Caco-2 (cell line): ENCODE measurements at regions of chrX and their contacts with region 1.

Region 1: DNA sequence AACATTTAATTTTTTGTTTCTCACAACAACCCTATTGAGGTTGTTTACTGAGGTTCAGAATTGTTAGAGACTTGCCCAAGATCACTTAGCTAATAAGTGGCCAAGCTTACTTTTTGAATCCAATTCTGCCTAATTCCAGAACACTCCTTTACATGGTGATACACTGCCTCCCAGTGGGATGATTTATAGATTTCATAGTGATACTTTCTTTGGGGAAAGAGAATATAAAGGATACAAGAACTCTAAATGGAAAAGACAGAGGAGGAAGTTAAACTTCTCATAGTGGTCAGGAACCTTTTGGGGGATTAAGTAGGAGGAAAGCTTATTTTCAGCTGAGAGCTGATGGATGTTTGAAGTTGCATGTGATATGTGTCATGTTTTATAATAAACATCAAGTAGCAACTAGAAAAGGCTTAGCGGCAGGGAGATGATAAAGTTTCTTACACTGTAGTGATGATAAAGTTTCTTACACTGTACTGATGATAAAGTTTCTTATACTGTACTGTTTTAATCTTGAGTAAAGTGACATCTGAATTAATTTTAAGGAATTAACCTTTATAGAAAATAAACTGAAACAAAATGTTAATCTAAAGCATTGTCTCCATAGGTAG is 15.3 kb downstream of the STAG2 start:
- DNase-seq: peak in 1 of 2 experiments; percentile 43
- H3K4me3 ChIP-seq: no peak overlapping the region
- H3K4me3 Mint-ChIP-seq: no peak overlapping the region
- H3K27ac Mint-ChIP-seq: no peak overlapping the region
- H3K4me1 ChIP-seq: no peaks in the 10 kb centered on the region
- H3K4me1 Mint-ChIP-seq: peaks cover 11% of the 10 kb centered on the region
- H3K27me3 ChIP-seq: no peaks in the 10 kb centered on the region
- H3K27me3 Mint-ChIP-seq: no peaks in the 10 kb centered on the region
- CTCF ChIP-seq: peak in 1 of 2 experiments; percentile 12

Region 2: GRCh38 chrX:123884809-123885408 is 91.9 kb before region 1 on chrX:
- CTCF ChIA-PET with region 1: interaction called, 5 read pairs
- POLR2A ChIA-PET with region 1: no interaction called
- intact Hi-C with region 1: loop called (anchors 1 kb)
- DNase-seq: peak in 1 of 2 experiments; percentile 60
- H3K4me3 ChIP-seq: no peak overlapping the region
- H3K4me3 Mint-ChIP-seq: no peak overlapping the region
- H3K27ac Mint-ChIP-seq: no peak overlapping the region
- H3K4me1 ChIP-seq: no peaks in the 10 kb centered on the region
- H3K4me1 Mint-ChIP-seq: peaks cover 11% of the 10 kb centered on the region
- H3K27me3 ChIP-seq: no peaks in the 10 kb centered on the region
- H3K27me3 Mint-ChIP-seq: no peaks in the 10 kb centered on the region
- CTCF ChIP-seq: peak; percentile 35 to 44

Region 3: DNA sequence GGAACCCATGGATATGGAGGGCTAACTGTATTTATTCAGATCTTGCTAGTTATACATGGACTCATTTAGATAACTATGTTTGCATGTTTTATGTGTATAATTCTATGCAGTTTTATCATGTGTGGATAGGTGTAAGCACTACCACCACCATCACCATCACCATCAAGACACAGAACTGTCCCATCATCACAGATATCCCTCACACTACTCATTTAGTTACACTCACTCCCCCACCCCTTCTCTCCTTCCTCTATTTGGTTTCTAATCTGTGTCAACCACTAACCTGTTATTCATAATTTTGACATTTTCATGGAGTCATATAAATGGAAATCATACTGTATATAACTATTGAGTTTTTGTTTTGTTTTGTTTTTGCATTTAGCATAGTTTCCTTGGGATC is 28.4 kb after region 1 on chrX:
- CTCF ChIA-PET with region 1: no interaction called
- POLR2A ChIA-PET with region 1: no interaction called
- intact Hi-C with region 1: no loop called
- DNase-seq: no peak
- H3K4me3 ChIP-seq: no peak overlapping the region
- H3K4me3 Mint-ChIP-seq: no peak overlapping the region
- H3K27ac Mint-ChIP-seq: no peak overlapping the region
- H3K4me1 ChIP-seq: no peaks in the 10 kb centered on the region
- H3K4me1 Mint-ChIP-seq: no peaks in the 10 kb centered on the region
- H3K27me3 ChIP-seq: no peaks in the 10 kb centered on the region
- H3K27me3 Mint-ChIP-seq: no peaks in the 10 kb centered on the region
- CTCF ChIP-seq: no peak

Region 4: DNA sequence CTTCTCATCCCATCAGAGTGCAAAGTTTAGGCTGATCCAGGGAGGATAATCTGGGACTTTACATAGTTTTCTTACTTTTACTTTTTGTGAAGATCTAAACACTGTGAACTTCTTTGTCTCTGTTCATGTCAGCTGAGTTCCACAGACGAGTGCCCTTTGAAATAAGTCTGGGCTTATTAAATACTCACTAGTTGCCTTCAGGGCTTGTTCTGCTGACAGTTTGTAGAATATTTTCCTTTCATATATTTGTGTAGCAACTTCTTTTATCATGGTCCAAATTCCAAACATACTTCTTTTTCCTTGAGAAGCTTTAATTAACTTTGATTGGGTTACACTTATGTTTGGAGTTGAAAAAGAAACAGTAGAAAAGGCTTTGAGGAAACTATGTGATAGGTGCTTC is 479.2 kb after region 1 on chrX:
- CTCF ChIA-PET with region 1: no interaction called
- POLR2A ChIA-PET with region 1: no interaction called
- intact Hi-C with region 1: no loop called
- DNase-seq: peak in 1 of 2 experiments; percentile 0
- H3K4me3 ChIP-seq: no peak overlapping the region
- H3K4me3 Mint-ChIP-seq: no peak overlapping the region
- H3K27ac Mint-ChIP-seq: no peak overlapping the region
- H3K4me1 ChIP-seq: no peaks in the 10 kb centered on the region
- H3K4me1 Mint-ChIP-seq: no peaks in the 10 kb centered on the region
- H3K27me3 ChIP-seq: no peaks in the 10 kb centered on the region
- H3K27me3 Mint-ChIP-seq: no peaks in the 10 kb centered on the region
- CTCF ChIP-seq: no peak